AG04449 (cell line): ENCODE measurements at regions of chr15 and their contacts with region 1.

Region 1: DNA sequence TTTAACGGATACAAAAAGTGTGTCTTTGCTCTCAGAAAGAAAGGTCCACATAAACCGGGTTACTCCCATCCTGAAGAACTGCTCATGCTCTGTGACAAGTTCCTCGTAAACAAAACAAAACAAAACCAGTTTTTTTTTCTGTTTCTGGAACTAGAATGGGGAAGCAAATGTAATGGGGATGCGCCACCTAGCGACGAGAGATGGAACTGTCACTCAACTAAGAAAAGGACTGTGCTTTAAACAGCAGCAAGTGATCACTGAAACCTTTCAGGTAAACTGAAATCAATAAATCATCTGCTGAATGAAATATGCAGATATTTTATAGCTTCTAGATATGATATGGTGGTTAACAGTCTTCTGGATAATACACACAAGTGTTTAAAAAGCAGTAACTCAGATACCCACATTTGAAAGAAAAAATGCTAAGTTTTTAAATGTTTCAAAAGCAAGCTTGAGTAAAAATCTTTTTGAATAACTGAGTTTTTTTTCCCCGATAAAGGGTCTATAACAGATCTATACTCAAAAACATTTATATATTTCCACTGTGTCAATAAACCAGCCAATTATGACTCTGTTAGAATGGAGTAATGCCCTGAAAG is 10.9 kb downstream of the TM2D3 start:
- DNase-seq: no peak
- H3K4me3 ChIP-seq: no peak overlapping the region
- CTCF ChIP-seq: peak; percentile 75

Region 2: GRCh38 chr15:101294731-101295606 is 346.3 kb before region 1 on chr15 and contains the start of gene SNRPA1:
- CTCF ChIA-PET with region 1: interaction called, 353 read pairs
- POLR2A ChIA-PET with region 1: no interaction called
- DNase-seq: peak; percentile 47
- H3K4me3 ChIP-seq: peak within 1 kb of the TSS; percentile 91
- CTCF ChIP-seq: no peak

Region 3: DNA sequence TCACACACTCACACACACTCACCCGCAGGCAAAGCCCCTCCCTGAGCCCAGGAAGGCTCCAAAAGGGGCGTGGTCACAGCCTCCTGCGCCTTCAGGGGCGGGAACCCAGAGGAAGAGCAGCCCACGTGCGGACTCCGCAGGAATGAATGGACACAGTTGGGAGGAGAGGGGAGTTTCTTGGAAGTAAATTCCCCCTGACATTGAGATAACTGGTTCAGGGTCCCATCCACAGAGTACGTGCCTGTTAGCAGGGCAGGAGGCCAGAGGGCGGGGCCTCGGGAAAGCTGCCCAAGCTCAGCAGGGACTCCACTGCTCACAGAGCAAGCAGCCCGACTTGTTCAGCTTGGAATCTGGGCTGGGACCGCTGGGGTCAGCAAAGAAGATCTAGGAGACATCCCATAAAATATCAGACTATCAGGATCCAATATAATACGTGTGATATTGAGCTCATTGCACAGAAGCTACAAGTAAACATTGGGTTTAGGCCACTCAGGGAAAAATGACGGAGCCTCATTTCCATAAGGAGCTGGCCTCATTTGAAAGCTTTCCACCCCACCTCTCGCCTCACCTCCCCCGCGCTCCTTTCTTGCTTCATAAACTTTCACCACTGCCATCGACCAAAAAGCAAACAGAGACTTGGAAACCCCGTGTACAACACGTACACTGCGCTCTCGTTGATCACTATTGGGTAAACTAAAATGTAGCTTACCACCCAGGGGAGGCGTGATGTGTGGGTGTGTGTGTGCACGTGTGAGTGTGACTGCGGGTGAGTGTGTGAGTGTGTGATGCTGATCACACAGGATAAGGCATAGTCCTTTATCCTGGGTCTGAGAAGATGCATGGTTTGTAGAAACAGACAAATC is 25.0 kb before region 1 on chr15:
- CTCF ChIA-PET with region 1: interaction called, 49 read pairs
- POLR2A ChIA-PET with region 1: no interaction called
- DNase-seq: no peak
- H3K4me3 ChIP-seq: peak overlapping the region; percentile 25; the same call in 1 of the 2 replicates
- CTCF ChIP-seq: no peak

Region 4: DNA sequence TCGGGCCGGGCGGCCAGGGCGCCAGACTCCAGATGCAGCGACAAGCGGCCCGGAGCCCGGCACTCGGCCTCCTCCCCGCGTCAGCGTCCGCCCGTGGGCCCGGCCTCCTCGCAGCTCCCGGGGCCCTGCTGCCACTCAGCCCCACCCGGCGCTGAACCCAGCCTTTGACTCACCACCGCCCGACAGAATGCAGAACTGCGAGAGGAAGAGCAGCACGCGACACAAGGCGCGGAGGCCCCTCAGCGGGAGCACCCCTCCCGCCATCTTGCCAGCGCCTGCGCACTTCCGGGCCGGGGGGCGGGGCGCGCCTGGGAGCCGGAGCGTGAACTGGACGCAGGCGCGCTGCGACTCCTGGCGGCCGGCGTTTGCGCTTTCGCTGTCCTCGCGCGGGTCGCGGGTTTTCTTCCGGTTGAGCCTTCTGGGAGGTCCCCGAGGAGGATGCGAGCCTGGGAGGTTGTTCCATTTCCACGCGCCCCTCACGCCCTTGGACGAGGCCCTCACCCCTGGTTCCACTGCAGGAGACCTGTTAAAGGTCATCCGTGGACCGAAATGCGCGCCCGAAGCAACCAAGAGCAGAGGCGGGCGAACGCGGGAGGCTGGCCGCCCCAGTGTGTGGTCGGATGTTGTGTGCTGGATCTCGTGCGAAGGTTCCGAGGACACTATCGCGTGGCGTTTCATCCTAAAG is 11.0 kb after region 1 on chr15 and contains the start of gene TM2D3:
- CTCF ChIA-PET with region 1: interaction called, 41 read pairs
- POLR2A ChIA-PET with region 1: no interaction called
- DNase-seq: no peak
- H3K4me3 ChIP-seq: peak within 1 kb of the TSS; percentile 93
- CTCF ChIP-seq: peak; percentile 88

Region 5: DNA sequence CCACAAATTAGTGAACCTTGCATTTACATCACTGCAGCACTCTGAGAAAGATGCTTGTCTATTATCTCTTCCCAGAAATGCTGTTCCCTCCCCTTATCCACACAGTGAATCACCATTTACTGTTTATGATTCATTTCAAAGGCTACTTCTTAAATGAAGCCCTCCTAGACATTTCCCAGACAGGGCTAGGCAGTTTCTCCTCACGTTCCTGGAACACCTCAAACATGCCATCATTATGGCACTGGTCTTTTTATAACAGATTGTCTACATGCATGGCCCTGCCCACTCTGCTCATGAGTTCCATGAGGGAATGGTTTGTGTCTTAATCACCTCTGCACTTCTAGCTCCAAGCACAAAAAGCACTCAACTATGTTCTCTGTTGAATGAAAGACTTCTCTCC is 43.1 kb after region 1 on chr15:
- CTCF ChIA-PET with region 1: interaction called, 15 read pairs
- POLR2A ChIA-PET with region 1: no interaction called
- DNase-seq: peak; percentile 82
- H3K4me3 ChIP-seq: no peak overlapping the region
- CTCF ChIP-seq: no peak